ENCODE measurements at regions of chr17 and their contacts with region 1.

Region 1: DNA sequence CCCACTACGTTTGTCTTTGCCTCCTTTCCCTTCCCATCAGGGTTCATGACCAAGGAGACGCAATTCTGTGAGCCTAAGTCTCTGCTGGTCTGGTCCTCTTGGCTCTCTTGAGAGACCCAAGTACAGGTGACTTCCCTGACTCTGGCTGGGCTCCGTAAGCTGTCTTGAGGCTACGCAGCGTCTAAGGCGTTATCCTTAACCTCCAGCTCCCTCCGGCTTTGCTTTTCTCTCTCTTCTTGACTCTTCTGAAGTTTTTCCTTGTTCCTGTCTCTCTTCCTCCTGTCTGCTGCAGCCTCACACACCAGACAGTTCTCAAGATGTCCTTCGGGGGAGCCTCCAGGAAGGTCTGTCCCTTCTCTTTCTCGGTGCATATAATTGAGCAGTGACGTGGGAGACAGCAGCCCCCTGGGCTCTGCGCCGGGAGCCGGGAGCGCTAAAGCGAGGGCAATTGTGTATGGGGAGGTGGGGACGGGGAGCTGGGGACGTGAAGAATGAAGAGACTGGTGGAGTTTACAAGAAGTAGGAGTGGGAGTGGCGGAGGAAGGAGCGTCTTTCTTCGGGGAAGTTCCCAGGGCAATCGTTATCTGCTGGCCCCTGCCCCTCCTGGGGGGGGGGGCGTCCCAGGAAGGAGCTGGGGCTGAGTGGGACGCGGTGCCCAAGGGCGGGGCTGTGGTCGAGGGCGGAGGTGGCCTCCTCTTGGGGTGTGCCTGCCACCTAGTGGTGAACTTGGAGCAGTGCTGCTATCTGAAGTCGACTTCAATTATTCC is 6.9 kb upstream of the PIRT start:
- DNase-seq: peak; percentile 37 to 64 (median 60)
- H3K4me3 ChIP-seq: peak overlapping the region; percentile 26 to 73 (median 34)
- H3K4me3 Mint-ChIP-seq: peak overlapping the region; percentile 85 to 91
- H3K27ac ChIP-seq: no peak overlapping the region
- H3K27ac Mint-ChIP-seq: peak overlapping the region in 2 of 7 donors; percentile 36 to 73
- H3K4me1 ChIP-seq: peaks cover 6 to 7% of the 10 kb centered on the region in 2 donors
- H3K4me1 Mint-ChIP-seq: peaks cover 8% of the 10 kb centered on the region
- H3K27me3 ChIP-seq: no peaks in the 10 kb centered on the region
- H3K27me3 Mint-ChIP-seq: peaks cover 5 to 8% (median 7%) of the 10 kb centered on the region in 3 donors
- CTCF ChIP-seq: peak; percentile 95

Region 2: GRCh38 chr17:10646392-10646990 is 198.3 kb before region 1 on chr17:
- intact Hi-C with region 1: loop called (anchors 5 to 10 kb)
- DNase-seq: peak; percentile 36 to 58 (median 57)
- H3K4me3 ChIP-seq: no peak overlapping the region
- H3K4me3 Mint-ChIP-seq: no peak overlapping the region
- H3K27ac ChIP-seq: no peak overlapping the region
- H3K27ac Mint-ChIP-seq: no peak overlapping the region
- H3K4me1 ChIP-seq: no peaks in the 10 kb centered on the region
- H3K4me1 Mint-ChIP-seq: no peaks in the 10 kb centered on the region
- H3K27me3 ChIP-seq: no peaks in the 10 kb centered on the region
- H3K27me3 Mint-ChIP-seq: peaks cover 0 to 1% (median 0%) of the 10 kb centered on the region in 3 donors
- CTCF ChIP-seq: peak; percentile 92

Region 3: GRCh38 chr17:10729334-10730193 is 115.2 kb before region 1 on chr17 and contains the start of gene TMEM220:
- intact Hi-C with region 1: loop called in 1 of 2 experiments (anchors 10 kb)
- DNase-seq: peak; percentile 40 to 44 (median 41)
- H3K4me3 ChIP-seq: peak within 1 kb of the TSS; percentile 66 to 91 (median 87)
- H3K4me3 Mint-ChIP-seq: peak within 1 kb of the TSS; percentile 92 to 98
- H3K27ac ChIP-seq: peak within 1 kb of the TSS in 1 of 2 donors; percentile 44
- H3K27ac Mint-ChIP-seq: peak within 1 kb of the TSS; percentile 4 to 81 (median 51)
- H3K4me1 ChIP-seq: peaks cover 6% of the 10 kb centered on the region in 2 donors
- H3K4me1 Mint-ChIP-seq: peaks cover 17% of the 10 kb centered on the region
- H3K27me3 ChIP-seq: no peaks in the 10 kb centered on the region
- H3K27me3 Mint-ChIP-seq: peaks cover 0 to 7% (median 3%) of the 10 kb centered on the region in 3 donors
- CTCF ChIP-seq: no peak
- polyA plus RNA-seq, gene TMEM220: 0.33 to 4.8 (median 1.1) TPM

Region 4: DNA sequence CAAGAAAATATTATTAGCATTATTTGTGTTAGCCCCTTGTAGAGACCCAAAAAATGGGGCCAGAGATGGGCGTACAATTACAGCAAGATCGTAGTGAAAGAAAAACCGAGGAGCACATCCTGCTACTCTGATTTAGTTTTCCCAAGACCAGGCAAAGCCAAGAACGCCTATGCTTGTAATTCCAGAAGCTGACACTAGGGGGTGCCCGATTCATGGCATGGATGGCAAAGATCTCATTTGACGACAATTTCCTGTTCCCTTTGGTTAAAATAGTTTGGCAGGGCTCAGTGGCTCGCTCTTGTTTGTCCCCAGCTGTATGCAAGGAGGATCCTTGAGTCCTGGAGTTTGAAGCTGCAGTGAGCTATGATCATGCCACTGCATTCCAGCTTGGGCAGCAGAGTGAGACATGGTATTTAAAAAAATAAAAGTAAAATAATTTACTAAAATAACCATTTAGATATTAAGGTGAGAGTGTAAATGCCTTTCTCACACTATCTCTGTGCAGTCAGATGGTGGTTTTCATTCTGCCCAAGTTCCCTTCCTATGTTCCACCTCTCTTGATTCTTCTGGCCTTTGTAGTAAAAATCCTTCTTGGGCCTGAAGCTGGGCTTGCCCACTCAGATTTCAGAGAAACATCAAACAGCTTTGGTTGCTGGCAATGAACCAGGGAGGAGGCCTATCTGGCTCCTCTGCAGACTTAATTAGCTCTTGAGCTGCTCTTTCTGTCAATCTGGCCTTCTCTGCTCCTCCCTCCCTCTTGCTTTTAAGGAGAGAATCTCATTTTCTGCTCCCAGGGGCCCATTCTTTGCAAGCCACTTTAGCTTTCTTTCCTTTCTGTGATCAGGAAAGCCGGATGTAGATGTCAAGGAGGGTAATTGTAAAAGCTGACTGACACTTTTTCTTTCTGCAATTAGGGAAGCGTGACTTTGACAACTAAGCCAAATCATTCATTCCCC is 72.1 kb before region 1 on chr17:
- intact Hi-C with region 1: loop called in 1 of 2 experiments (anchors 2 kb)
- DNase-seq: peak; percentile 33 to 60 (median 48)
- H3K4me3 ChIP-seq: no peak overlapping the region
- H3K4me3 Mint-ChIP-seq: no peak overlapping the region
- H3K27ac ChIP-seq: no peak overlapping the region
- H3K27ac Mint-ChIP-seq: peak overlapping the region in 2 of 7 donors; percentile 25 to 75
- H3K4me1 ChIP-seq: peaks cover 4 to 12% of the 10 kb centered on the region in 2 donors
- H3K4me1 Mint-ChIP-seq: peaks cover 21% of the 10 kb centered on the region
- H3K27me3 ChIP-seq: no peaks in the 10 kb centered on the region
- H3K27me3 Mint-ChIP-seq: peaks cover 0 to 1% (median 0%) of the 10 kb centered on the region in 3 donors
- CTCF ChIP-seq: peak; percentile 98

Region 5: GRCh38 chr17:10920558-10921108 is 75.8 kb after region 1 on chr17:
- intact Hi-C with region 1: no loop called
- DNase-seq: no peak
- H3K4me3 ChIP-seq: no peak overlapping the region
- H3K4me3 Mint-ChIP-seq: no peak overlapping the region
- H3K27ac ChIP-seq: no peak overlapping the region
- H3K27ac Mint-ChIP-seq: no peak overlapping the region
- H3K4me1 ChIP-seq: no peaks in the 10 kb centered on the region
- H3K4me1 Mint-ChIP-seq: no peaks in the 10 kb centered on the region
- H3K27me3 ChIP-seq: no peaks in the 10 kb centered on the region
- H3K27me3 Mint-ChIP-seq: peaks cover 0 to under 1% (median 0%) of the 10 kb centered on the region in 3 donors
- CTCF ChIP-seq: no peak

Measured in CD14-positive monocyte (primary cell).